A673 (cell line): ENCODE measurements at regions of chr7 and their contacts with region 1.

Region 1: DNA sequence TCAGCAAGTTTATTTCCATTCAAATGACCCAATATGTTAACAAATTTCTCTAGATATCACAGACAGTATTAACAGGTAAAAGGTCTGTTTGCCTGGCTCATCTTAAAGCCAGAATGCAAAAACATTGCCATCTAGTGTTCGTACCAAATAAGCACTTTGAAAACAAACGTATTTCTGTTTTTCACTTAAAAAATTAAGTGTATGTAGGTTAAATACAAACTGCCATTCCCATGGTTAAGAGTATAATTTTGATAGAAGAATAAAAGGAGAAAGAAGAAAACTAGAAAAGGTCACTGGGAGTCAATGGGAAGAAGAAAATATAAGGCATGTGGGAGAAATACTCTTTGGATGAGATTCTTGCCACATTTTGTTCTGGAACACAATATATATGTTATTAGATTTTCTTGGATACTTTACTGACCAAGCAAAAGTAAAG is 51.0 kb downstream of the ORC5 start:
- DNase-seq: peak; percentile 19
- H3K4me3 ChIP-seq: no peak overlapping the region
- H3K27ac ChIP-seq: no peak overlapping the region
- H3K4me1 ChIP-seq: no peaks in the 10 kb centered on the region
- H3K27me3 ChIP-seq: no peaks in the 10 kb centered on the region
- CTCF ChIP-seq: peak; percentile 79

Region 2: GRCh38 chr7:103447073-103447951 is 709.5 kb before region 1 on chr7:
- CTCF ChIA-PET with region 1: no interaction called
- POLR2A ChIA-PET with region 1: no interaction called
- intact Hi-C with region 1: loop called (anchors 5 kb)
- DNase-seq: peak; percentile 75
- H3K4me3 ChIP-seq: no peak overlapping the region
- H3K27ac ChIP-seq: no peak overlapping the region
- H3K4me1 ChIP-seq: no peaks in the 10 kb centered on the region
- H3K27me3 ChIP-seq: peaks cover 60% of the 10 kb centered on the region
- CTCF ChIP-seq: peak; percentile 75

Region 3: DNA sequence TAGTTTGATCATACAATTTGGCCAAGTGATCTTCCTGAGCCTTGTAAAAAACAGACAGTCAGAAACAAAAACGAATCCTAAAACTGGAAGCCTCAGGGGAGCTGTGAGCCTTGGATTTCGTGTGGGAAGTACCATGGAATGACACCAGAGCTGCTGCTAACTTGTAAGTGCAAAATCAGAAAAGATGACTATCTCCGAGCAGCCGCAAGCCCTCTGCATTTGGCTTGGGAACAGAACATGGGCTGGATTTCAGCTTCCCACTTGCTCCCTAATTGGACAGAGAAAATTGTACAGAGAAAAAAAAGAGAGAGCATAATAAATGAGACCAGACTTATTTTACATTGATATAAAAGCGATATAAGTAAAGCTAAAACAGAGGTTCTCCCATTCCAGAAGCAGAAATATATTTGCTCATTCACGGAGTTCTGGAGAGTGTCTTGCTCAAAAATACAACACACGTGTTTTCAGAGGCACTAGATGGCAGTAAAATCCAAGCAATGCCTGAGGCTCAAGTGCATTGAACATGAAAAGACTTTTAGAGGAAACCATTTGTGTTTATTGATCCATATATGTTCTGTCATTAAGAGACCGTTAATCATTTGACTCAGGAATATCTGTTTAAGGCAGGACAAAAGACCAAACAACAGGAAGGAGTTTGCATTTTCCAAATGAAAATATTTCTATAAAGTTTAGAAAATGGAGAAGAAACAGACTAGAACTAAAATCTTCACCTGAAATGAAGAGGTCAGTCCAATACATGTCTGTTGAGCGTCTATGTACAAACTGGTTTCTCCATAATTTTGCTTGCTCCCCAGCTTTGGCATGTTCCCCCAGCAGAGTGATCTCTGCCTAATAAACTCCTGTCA is 632.6 kb before region 1 on chr7:
- CTCF ChIA-PET with region 1: no interaction called
- POLR2A ChIA-PET with region 1: no interaction called
- intact Hi-C with region 1: loop called (anchors 2 kb)
- DNase-seq: peak; percentile 48
- H3K4me3 ChIP-seq: no peak overlapping the region
- H3K27ac ChIP-seq: no peak overlapping the region
- H3K4me1 ChIP-seq: no peaks in the 10 kb centered on the region
- H3K27me3 ChIP-seq: peaks cover 68% of the 10 kb centered on the region
- CTCF ChIP-seq: peak; percentile 54

Region 4: GRCh38 chr7:103573479-103574058 is 583.3 kb before region 1 on chr7:
- CTCF ChIA-PET with region 1: no interaction called
- POLR2A ChIA-PET with region 1: no interaction called
- intact Hi-C with region 1: loop called (anchors 2 kb)
- DNase-seq: peak; percentile 45
- H3K4me3 ChIP-seq: no peak overlapping the region
- H3K27ac ChIP-seq: no peak overlapping the region
- H3K4me1 ChIP-seq: no peaks in the 10 kb centered on the region
- H3K27me3 ChIP-seq: peaks cover 76% of the 10 kb centered on the region
- CTCF ChIP-seq: peak; percentile 64

Region 5: DNA sequence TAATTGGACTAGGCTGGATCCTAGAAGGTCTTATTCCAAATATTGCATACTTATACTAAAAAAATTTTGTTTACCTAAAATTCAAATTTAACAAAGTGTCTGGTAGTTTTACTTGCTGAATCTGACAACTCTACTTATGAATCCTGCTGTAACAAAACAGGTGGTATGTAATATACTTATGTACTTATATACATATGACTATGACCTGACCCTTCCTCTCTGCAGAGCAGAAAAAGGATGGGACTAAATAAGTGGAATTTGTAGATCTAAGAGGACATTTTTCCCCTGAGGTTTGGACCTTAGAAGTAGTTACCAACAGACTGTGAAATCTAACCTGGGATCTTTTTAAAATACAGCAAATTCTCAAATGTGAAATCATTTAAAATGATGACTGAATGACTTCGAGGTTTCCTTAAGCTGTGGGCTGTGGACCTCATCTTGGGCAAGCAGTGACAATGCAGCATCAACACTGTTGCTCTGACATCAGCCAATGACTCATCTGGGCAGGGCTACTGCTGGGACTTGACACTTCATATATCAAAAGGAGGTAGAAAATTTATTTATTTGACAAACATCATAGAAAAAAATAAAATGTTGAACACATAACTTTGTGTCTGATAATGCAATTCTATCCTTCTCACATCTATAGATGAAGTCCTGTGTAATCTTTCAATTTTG is 241.0 kb before region 1 on chr7:
- CTCF ChIA-PET with region 1: no interaction called
- POLR2A ChIA-PET with region 1: no interaction called
- intact Hi-C with region 1: no loop called
- DNase-seq: peak; percentile 3
- H3K4me3 ChIP-seq: no peak overlapping the region
- H3K27ac ChIP-seq: no peak overlapping the region
- H3K4me1 ChIP-seq: no peaks in the 10 kb centered on the region
- H3K27me3 ChIP-seq: peaks cover 47% of the 10 kb centered on the region
- CTCF ChIP-seq: no peak